ENCODE measurements at regions of chr16 and their contacts with region 1.

Region 1: DNA sequence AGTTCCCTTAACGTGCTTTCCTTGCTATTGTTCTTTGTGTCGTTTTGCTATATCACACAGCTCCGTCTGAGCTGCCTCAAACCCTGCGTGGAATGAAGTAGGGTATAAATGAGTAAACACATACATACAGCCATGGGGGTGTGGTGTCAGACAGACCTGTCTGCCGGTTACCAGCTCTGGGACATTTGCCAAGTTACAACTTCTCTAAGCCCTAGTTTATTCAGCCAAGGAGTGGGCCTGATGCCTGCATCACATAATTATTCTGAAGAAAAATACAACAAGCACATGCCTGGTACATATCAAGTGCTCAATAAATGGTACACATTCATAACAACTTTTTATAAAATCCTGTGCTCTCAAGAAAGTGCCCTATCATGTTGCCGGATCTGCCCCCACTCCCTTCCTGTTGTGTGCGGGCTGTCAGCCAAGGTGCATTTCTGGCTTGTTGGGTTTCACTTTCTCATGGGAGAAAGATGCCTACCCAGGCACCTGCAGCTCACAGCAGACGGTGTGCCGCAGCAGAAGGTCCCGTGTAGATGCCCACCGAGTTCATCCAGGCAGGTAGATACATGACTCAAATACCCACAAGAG is 30.5 kb downstream of the SMPD3 start:
- DNase-seq: peak; percentile 89
- H3K4me3 Mint-ChIP-seq: peak overlapping the region; percentile 74
- H3K27ac Mint-ChIP-seq: peak overlapping the region; percentile 94
- H3K4me1 Mint-ChIP-seq: peaks cover 45% of the 10 kb centered on the region
- H3K27me3 Mint-ChIP-seq: no peaks in the 10 kb centered on the region

Region 2: GRCh38 chr16:68351962-68352431 is 65.8 kb before region 1 on chr16:
- CTCF ChIA-PET with region 1: no interaction called
- POLR2A ChIA-PET with region 1: no interaction called
- DNase-seq: no peak
- H3K4me3 Mint-ChIP-seq: no peak overlapping the region
- H3K27ac Mint-ChIP-seq: no peak overlapping the region
- H3K4me1 Mint-ChIP-seq: peaks cover 32% of the 10 kb centered on the region
- H3K27me3 Mint-ChIP-seq: peaks cover 5% of the 10 kb centered on the region

Region 3: DNA sequence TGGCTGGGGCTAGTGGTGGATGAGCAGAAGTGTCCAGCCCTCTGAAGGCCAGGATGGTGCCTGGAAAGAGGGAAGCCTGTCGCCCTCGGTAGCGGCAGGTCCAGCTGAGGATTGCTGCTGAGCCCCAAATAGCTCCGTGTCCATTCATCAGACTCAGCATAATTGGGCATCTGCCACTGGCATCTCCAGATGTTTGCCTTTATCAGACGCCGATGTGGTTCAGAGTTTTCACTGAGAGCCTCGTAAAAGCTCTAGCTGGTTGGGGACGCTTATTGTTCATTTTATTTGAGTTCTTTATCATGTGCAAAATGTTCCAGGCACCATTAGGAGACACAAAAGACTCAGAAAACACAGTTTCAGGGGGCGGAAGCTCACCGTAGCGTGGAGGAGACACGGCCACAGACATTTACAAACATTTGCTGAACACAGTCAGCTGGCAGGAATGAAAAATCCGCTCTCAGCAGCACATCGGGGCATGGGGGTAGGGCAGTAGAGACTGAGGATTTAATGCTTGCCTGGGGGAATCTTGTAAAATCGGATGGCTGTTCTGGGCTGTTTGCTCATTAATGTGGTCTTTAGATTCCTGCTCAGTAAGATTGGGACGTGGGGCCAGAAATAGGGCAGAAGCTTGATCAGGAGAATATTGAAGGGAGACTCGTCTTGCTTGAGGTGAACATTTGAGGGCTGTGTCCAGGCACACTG is 11.2 kb before region 1 on chr16:
- CTCF ChIA-PET with region 1: interaction called, 24 read pairs
- POLR2A ChIA-PET with region 1: interaction called, 3 read pairs
- DNase-seq: no peak
- H3K4me3 Mint-ChIP-seq: no peak overlapping the region
- H3K27ac Mint-ChIP-seq: no peak overlapping the region
- H3K4me1 Mint-ChIP-seq: peaks cover 7% of the 10 kb centered on the region
- H3K27me3 Mint-ChIP-seq: peaks cover 17% of the 10 kb centered on the region

Measured in activated CD4-positive, alpha-beta T cell treated with anti-CD3 and anti-CD28 coated beads, Interleukin-2, amount 10 ng/mL, durations not matched to agents 7 days and 5 days (primary cell).